CD4-positive, alpha-beta T cell (primary cell): ENCODE measurements at regions of chr3 and their contacts with region 1.

Region 1: GRCh38 chr3:46349485-46350261 is 4.2 kb upstream of the CCR2 start:
- DNase-seq: peak in 3 of 14 experiments; percentile 56 to 75 (median 56)
- ATAC-seq: no peak
- H3K4me3 ChIP-seq: no peak overlapping the region
- H3K4me3 Mint-ChIP-seq: peak overlapping the region; percentile 3
- H3K27ac ChIP-seq: peak overlapping the region; percentile 8 to 27
- H3K27ac Mint-ChIP-seq: peak overlapping the region; percentile 13
- H3K4me1 ChIP-seq: peaks cover 47% of the 10 kb centered on the region
- H3K4me1 Mint-ChIP-seq: peaks cover 68% of the 10 kb centered on the region
- H3K27me3 ChIP-seq: no peaks in the 10 kb centered on the region
- H3K27me3 Mint-ChIP-seq: no peaks in the 10 kb centered on the region
- CTCF ChIP-seq: no peak

Region 2: GRCh38 chr3:46222435-46223161 is 127.1 kb before region 1 on chr3:
- CTCF ChIA-PET with region 1: no interaction called
- POLR2A ChIA-PET with region 1: no interaction called
- intact Hi-C with region 1: no loop called
- DNase-seq: peak in 3 of 14 experiments; percentile 17 to 57 (median 45)
- ATAC-seq: no peak
- H3K4me3 ChIP-seq: no peak overlapping the region
- H3K4me3 Mint-ChIP-seq: no peak overlapping the region
- H3K27ac ChIP-seq: no peak overlapping the region
- H3K27ac Mint-ChIP-seq: no peak overlapping the region
- H3K4me1 ChIP-seq: peaks cover 3% of the 10 kb centered on the region
- H3K4me1 Mint-ChIP-seq: no peaks in the 10 kb centered on the region
- H3K27me3 ChIP-seq: no peaks in the 10 kb centered on the region
- H3K27me3 Mint-ChIP-seq: no peaks in the 10 kb centered on the region
- CTCF ChIP-seq: no peak

Region 3: DNA sequence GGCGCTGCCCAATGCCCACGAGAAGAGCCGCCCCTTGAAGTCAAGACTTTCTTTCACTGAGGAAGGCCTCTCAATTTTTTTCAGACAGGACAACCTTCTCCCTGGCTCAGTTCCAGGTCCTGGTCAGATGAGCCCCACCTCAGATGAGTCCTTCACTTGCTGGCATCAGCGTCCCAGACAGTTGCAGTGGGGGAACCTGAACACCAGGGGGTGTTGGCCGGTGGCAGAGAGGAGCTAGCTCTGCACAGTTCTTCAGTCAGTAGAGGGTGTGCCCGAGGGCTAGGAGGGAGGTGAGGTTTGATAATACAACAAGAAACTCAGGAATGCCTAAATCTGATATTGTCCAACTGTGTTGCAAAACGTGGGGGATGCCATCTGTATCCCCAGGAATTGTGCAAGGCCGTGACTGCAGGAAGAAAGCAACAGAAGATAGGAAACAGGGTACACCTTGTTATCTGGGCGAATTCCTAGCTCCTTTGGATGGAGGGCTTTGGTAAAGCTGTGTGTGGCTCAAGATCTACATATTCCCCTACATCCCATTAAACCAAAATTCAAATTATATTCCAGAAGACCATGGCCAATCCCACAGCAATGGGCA is 73.1 kb before region 1 on chr3:
- CTCF ChIA-PET with region 1: interaction called, 10 read pairs
- POLR2A ChIA-PET with region 1: no interaction called
- intact Hi-C with region 1: no loop called
- DNase-seq: peak; percentile 53 to 87 (median 70)
- ATAC-seq: peak; percentile 82
- H3K4me3 ChIP-seq: no peak overlapping the region
- H3K4me3 Mint-ChIP-seq: no peak overlapping the region
- H3K27ac ChIP-seq: no peak overlapping the region
- H3K27ac Mint-ChIP-seq: no peak overlapping the region
- H3K4me1 ChIP-seq: peaks cover 40% of the 10 kb centered on the region
- H3K4me1 Mint-ChIP-seq: peaks cover 29% of the 10 kb centered on the region
- H3K27me3 ChIP-seq: no peaks in the 10 kb centered on the region
- H3K27me3 Mint-ChIP-seq: no peaks in the 10 kb centered on the region
- CTCF ChIP-seq: peak; percentile 72

Region 4: GRCh38 chr3:46312991-46313390 is 36.7 kb before region 1 on chr3:
- CTCF ChIA-PET with region 1: interaction called, 4 read pairs
- POLR2A ChIA-PET with region 1: no interaction called
- intact Hi-C with region 1: loop called in 1 of 2 experiments (anchors 1 kb)
- DNase-seq: peak in 2 of 14 experiments; percentile 48 to 55
- ATAC-seq: no peak
- H3K4me3 ChIP-seq: no peak overlapping the region
- H3K4me3 Mint-ChIP-seq: no peak overlapping the region
- H3K27ac ChIP-seq: no peak overlapping the region
- H3K27ac Mint-ChIP-seq: no peak overlapping the region
- H3K4me1 ChIP-seq: no peaks in the 10 kb centered on the region
- H3K4me1 Mint-ChIP-seq: no peaks in the 10 kb centered on the region
- H3K27me3 ChIP-seq: no peaks in the 10 kb centered on the region
- H3K27me3 Mint-ChIP-seq: no peaks in the 10 kb centered on the region
- CTCF ChIP-seq: no peak